H1 (cell line): ENCODE measurements at regions of chr19 and their contacts with region 1.

Region 1: DNA sequence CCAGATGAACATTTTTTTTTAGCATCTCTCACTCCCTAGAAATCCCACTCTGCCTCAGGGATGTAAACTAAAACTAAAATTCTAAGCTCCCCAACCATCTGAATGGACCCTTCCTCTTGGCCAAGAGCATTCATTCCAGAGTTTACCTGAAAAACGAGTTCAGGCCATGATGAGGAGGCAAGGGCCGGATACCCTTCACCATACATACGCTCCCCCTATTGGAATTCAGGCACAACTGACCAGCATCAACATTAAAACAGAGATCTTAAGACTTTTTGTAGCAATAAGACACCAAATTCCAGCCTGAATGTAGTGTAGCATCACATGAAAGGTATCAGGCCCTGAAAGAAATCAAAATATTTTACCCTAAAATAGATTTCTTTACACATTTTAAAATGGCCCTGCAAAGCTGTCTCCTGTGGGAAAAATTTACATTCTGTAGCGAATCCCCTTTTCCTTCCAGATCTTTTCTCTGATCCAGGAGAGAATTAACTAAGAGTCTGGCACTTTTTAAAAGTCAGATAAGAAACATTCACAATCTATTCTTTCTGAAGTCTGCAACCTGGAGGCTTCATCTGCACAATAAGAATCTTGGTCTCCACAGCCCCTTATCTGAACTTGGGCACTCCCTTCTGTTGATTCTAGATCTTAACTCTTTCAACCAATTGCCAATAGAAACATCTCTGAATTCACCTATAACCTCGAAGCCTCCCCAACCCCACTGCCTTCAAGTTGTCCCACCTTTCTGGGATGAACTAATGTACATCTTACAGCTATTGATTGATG is 888.5 kb downstream of the UQCRFS1 start:
- DNase-seq: no peak
- H3K4me3 ChIP-seq: no peak overlapping the region
- H3K27ac ChIP-seq: no peak overlapping the region
- H3K4me1 ChIP-seq: peaks cover 0 to 6% (median 5%) of the 10 kb centered on the region in 4 experiments; a peak in 3 of 7 replicates
- H3K27me3 ChIP-seq: no peaks in the 10 kb centered on the region
- CTCF ChIP-seq: peak; percentile 39 to 67 (median 63)
- EP300 ChIP-seq: no peak
- POLR2A ChIP-seq: no peak
- RAD21 ChIP-seq: peak; percentile 64 to 69

Region 2: GRCh38 chr19:27974082-27974513 is 350.4 kb before region 1 on chr19:
- CTCF ChIA-PET with region 1: interaction called, 92 read pairs
- POLR2A ChIA-PET with region 1: no interaction called
- DNase-seq: peak in 1 of 2 experiments; percentile 52
- H3K4me3 ChIP-seq: no peak overlapping the region
- H3K27ac ChIP-seq: no peak overlapping the region
- H3K4me1 ChIP-seq: peaks cover 0 to 5% (median 2%) of the 10 kb centered on the region in 4 experiments; a peak in 2 of 7 replicates
- H3K27me3 ChIP-seq: no peaks in the 10 kb centered on the region; a peak in 1 of 7 replicates
- CTCF ChIP-seq: peak; percentile 80 to 86 (median 85)
- EP300 ChIP-seq: no peak
- POLR2A ChIP-seq: no peak
- RAD21 ChIP-seq: peak; percentile 97

Region 3: DNA sequence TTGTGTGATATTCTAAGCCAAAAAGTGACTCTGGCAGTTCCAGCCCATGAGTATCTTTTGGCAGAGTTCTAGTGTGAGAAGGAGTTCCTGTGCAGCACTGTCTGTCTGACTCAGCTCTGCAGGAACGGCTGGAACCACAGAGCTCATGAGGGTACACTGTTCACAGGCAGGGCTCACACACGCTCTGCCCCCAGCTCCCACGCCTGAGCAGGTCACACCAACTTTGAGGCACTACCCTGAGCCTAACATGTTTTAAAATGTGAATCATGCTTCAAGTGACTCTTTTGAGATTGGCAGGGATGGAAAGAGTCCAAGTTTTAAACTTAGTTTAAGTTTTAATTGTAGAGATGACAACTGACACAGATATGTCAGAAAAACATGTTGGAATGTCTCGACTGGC is 314.8 kb before region 1 on chr19:
- CTCF ChIA-PET with region 1: interaction called, 17 read pairs
- POLR2A ChIA-PET with region 1: no interaction called
- DNase-seq: no peak
- H3K4me3 ChIP-seq: no peak overlapping the region
- H3K27ac ChIP-seq: no peak overlapping the region
- H3K4me1 ChIP-seq: no peaks in the 10 kb centered on the region
- H3K27me3 ChIP-seq: no peaks in the 10 kb centered on the region
- CTCF ChIP-seq: no peak
- EP300 ChIP-seq: no peak
- POLR2A ChIP-seq: no peak
- RAD21 ChIP-seq: no peak

Region 4: DNA sequence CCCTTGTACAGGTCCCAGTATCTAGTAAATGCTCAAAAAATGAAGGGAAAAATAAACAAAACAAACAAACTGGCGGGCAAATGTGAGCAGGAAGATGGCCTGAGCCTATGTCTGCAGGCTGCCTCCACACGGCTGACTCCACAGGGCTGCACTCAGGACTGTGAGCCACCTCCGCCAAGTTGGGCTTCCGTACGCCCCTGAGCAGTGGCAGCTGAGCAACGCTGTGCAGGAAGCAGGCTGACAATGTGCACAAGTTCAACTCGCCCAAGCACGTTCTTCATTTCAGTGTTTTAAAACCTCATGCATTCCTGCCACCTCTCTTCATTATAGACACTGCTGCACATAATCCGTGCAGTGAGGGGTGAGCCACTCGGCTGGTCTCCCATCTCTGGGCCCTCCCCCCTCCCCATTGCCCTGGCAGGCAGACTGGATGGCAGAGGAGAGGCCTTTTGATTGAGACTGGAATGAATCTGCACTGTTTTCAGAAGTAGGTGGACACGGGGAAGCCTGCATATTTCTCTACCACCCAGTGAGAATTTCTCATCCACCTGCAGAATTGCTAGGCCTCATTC is 26.8 kb before region 1 on chr19:
- CTCF ChIA-PET with region 1: interaction called, 28 read pairs
- POLR2A ChIA-PET with region 1: no interaction called
- DNase-seq: no peak
- H3K4me3 ChIP-seq: no peak overlapping the region
- H3K27ac ChIP-seq: no peak overlapping the region
- H3K4me1 ChIP-seq: peaks cover under 1 to 17% (median 11%) of the 10 kb centered on the region in 4 experiments; a peak in 6 of 7 replicates
- H3K27me3 ChIP-seq: no peaks in the 10 kb centered on the region
- CTCF ChIP-seq: no peak
- EP300 ChIP-seq: no peak
- POLR2A ChIP-seq: no peak
- RAD21 ChIP-seq: no peak

Region 5: GRCh38 chr19:28358633-28359032 is 34.2 kb after region 1 on chr19:
- CTCF ChIA-PET with region 1: no interaction called
- POLR2A ChIA-PET with region 1: no interaction called
- DNase-seq: no peak
- H3K4me3 ChIP-seq: no peak overlapping the region
- H3K27ac ChIP-seq: no peak overlapping the region
- H3K4me1 ChIP-seq: peaks cover 0 to 3% (median 1%) of the 10 kb centered on the region in 4 experiments; a peak in 3 of 7 replicates
- H3K27me3 ChIP-seq: no peaks in the 10 kb centered on the region
- CTCF ChIP-seq: no peak
- EP300 ChIP-seq: no peak
- POLR2A ChIP-seq: no peak
- RAD21 ChIP-seq: no peak